Heart right ventricle (tissue), 16 donors: ENCODE measurements at regions of chr12 and their contacts with region 1.

Region 1: GRCh38 chr12:106136263-106136662 is 2.5 kb downstream of the NUAK1 start:
- DNase-seq: peak; percentile 91 to 92
- ATAC-seq: peak in 6 of 8 donors; percentile 0 to 66 (median 46)
- H3K4me3 ChIP-seq: peak overlapping the region; percentile 64 to 97 (median 88)
- H3K27ac ChIP-seq: peak overlapping the region; percentile 93 to 100 (median 98)
- H3K4me1 ChIP-seq: peaks cover 26 to 75% (median 61%) of the 10 kb centered on the region in 9 donors
- H3K27me3 ChIP-seq: peaks cover 0 to 54% (median 0%) of the 10 kb centered on the region in 7 donors
- CTCF ChIP-seq: peak; percentile 79 to 93 (median 87)

Region 2: GRCh38 chr12:105775343-105775742 is 360.9 kb before region 1 on chr12:
- intact Hi-C with region 1: loop called in 1 of 10 experiments (anchors 10 kb)
- DNase-seq: no peak
- ATAC-seq: peak in 7 of 8 donors; percentile 33 to 56 (median 52)
- H3K4me3 ChIP-seq: no peak overlapping the region
- H3K27ac ChIP-seq: no peak overlapping the region
- H3K4me1 ChIP-seq: peaks cover 0 to 10% (median 0%) of the 10 kb centered on the region in 9 donors
- H3K27me3 ChIP-seq: no peaks in the 10 kb centered on the region
- CTCF ChIP-seq: peak in 7 of 9 donors; percentile 8 to 41 (median 23)

Region 3: DNA sequence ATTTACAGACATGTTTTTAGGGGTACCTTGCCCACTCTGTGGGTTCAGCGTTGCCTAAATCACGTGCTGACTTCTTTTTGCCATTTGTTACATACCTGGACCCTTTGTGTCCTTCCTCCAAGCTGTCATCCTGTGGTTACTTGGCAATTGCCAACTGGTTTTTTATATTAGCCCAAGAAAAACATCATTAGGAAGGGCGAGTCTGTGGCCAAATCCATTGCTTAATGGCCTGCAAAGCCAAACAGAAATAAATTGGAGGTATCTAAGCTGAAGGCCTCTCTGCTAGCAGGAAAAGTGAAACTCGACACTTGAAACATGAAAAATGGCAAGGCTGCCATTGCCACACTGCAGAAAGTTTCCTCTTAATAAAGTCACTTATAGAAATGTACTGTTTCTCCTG is 187.9 kb before region 1 on chr12:
- intact Hi-C with region 1: loop called in 2 of 10 experiments (anchors 10 kb)
- DNase-seq: no peak
- ATAC-seq: no peak
- H3K4me3 ChIP-seq: no peak overlapping the region
- H3K27ac ChIP-seq: peak overlapping the region in 5 of 10 donors; percentile 18 to 78 (median 38)
- H3K4me1 ChIP-seq: peaks cover 0 to 37% (median 4%) of the 10 kb centered on the region in 9 donors
- H3K27me3 ChIP-seq: no peaks in the 10 kb centered on the region
- CTCF ChIP-seq: no peak

Region 4: DNA sequence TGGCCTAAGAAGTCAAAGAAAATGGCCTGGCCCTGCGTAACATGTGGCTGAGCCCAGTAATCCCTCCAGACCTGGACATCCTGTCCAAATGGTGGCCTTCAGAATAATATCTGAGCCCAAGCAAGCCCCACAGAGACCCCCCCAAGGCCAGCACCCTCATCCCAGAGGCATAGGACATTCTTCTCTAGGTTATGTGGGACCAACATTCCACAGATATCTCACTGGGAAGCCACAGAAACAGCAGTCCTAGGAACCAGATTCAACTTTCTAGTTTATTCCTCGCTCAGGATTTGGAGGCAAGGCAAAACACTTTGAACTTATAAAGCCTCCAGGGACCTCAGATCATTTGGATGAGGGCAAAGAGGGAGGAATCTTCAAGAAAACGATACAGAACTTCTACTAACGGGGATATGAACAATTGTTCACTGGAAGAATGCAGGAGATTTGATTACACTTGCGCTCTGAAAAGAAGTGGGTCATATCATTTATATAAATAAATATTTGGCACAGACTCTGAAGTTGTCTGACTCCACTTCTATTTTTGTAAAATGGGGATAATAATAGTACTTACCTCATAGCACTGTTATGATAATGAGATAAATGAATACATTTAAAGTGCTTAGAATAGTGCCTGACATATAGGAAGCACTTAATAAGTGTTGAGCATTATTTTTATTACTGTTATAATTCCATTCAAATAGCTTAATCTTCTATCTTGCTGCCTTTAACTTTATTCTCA is 169.1 kb before region 1 on chr12:
- intact Hi-C with region 1: loop called in 2 of 10 experiments (anchors 5 to 10 kb)
- DNase-seq: no peak
- ATAC-seq: peak; percentile 74 to 95 (median 90)
- H3K4me3 ChIP-seq: no peak overlapping the region
- H3K27ac ChIP-seq: peak overlapping the region; percentile 45 to 93 (median 75)
- H3K4me1 ChIP-seq: peaks cover 4 to 30% (median 20%) of the 10 kb centered on the region in 9 donors
- H3K27me3 ChIP-seq: no peaks in the 10 kb centered on the region
- CTCF ChIP-seq: no peak

Region 5: DNA sequence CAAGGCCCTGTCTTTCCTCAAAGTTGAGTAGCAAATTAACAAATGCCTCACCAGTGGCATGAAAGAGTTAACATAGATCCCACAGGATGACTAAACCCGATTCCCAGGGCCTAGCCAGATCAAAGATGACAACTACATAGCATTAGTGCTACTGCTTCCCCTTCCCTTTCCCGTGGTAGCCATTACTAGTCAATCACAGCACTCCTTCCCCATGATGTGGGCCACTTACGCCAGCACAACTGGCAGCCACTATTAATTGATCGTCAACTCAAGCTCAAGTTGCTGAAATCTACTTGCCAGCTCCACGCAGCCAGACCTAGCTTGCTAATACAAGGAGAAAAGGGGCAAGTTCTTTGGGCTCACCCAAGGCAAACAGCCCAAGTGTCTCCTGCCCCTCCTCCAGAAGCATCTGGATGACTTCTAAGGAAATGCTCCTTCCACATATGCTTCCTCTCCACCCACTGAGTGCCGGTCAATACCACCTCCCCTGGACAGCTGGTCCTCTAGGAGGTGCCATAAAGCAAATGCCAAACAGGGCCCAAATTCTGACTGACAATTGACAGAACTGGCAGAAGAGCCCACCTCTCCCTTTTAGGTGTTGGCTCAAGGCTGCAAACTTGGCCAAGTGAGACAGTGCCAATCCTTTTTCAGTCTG is 70.1 kb before region 1 on chr12:
- intact Hi-C with region 1: loop called in 2 of 10 experiments (anchors 1 to 10 kb)
- DNase-seq: no peak
- ATAC-seq: peak in 2 of 8 donors; percentile 23 to 39
- H3K4me3 ChIP-seq: no peak overlapping the region
- H3K27ac ChIP-seq: peak overlapping the region in 9 of 10 donors; percentile 33 to 82 (median 51)
- H3K4me1 ChIP-seq: peaks cover 0 to 63% (median 36%) of the 10 kb centered on the region in 9 donors
- H3K27me3 ChIP-seq: no peaks in the 10 kb centered on the region
- CTCF ChIP-seq: no peak

Region 6: DNA sequence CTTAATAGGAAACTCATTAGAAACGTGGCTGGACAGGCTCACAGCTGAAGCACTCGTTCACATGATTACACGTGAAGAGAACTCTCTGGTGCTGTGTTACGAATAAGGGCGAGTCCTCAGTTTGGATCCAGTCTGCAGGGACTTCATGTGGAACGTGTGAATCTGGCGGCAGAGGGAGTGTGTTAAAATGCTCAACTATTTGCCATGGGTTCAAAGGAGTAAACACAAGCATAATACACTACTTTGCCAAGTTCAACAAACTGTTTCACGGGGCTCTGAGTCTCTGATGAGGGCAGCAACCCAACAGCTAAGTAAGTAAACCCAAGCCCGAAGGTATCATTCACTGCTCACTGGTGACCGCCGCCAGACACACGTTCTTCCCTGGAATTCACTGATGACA is 39.9 kb before region 1 on chr12:
- intact Hi-C with region 1: loop called in 2 of 10 experiments (anchors 5 kb)
- DNase-seq: no peak
- ATAC-seq: peak; percentile 21 to 82 (median 70)
- H3K4me3 ChIP-seq: no peak overlapping the region
- H3K27ac ChIP-seq: peak overlapping the region; percentile 17 to 93 (median 58)
- H3K4me1 ChIP-seq: peaks cover 17 to 98% (median 84%) of the 10 kb centered on the region in 9 donors
- H3K27me3 ChIP-seq: no peaks in the 10 kb centered on the region
- CTCF ChIP-seq: peak in 1 of 9 donors; percentile 9